K562 (cell line): ENCODE measurements at regions of chr22 and their contacts with region 1.

Region 1: DNA sequence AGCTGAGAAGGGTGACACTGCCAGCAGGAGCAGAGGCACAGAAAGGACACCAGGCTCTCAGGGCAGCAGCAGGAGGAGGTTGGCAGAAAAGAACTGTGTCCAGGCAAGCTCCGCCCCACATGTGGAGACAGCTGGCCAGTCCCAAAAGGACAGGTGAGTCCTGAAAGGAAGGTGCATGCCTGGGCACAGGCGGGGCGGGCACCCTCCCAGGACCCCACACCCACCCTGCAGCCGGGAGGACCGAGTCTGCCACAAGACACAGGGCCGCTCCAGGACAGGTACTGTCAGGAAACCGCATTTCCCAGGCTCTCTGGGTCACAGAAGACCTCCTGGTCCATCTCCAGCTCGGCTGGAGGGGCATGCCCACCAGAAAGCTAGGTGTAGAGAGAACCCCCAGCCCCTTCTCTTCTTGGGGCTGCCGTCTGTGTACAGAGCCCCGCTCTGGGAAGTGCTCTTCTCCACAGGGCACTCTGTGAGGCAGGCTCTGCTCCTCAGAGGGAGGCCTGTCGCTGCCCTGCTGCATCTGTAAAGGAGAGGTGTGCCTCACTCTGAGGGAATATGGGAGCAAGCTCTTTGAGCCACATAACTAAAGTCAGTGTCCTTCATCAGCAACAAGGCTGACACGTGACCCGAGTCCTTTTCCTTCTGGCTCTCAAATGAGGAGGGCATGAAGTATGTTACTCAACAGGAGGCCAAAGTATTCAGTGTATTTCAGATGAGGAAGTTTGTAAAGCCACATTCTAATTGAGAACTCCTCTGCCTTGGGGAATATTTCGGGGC is 50.5 kb downstream of the CLTCL1 start:
- DNase-seq: peak in 2 of 4 experiments; percentile 33 to 37
- ATAC-seq: peak; percentile 40
- H3K4me3 ChIP-seq: no peak overlapping the region
- H3K27ac ChIP-seq: no peak overlapping the region
- H3K4me1 ChIP-seq: peaks cover 4 to 6% of the 10 kb centered on the region in 2 experiments; a peak in 4 of 5 replicates
- H3K27me3 ChIP-seq: peaks cover 32 to 53% of the 10 kb centered on the region in 2 experiments; a peak in 4 of 5 replicates
- CTCF ChIP-seq: no peak
- EP300 ChIP-seq: no peak
- POLR2A ChIP-seq: no peak
- RAD21 ChIP-seq: no peak

Region 2: GRCh38 chr22:19226428-19226827 is 14.6 kb before region 1 on chr22:
- CTCF ChIA-PET with region 1: no interaction called
- POLR2A ChIA-PET with region 1: interaction called, 13 read pairs
- in situ Hi-C with region 1: no loop called
- intact Hi-C with region 1: no loop called
- DNase-seq: no peak
- ATAC-seq: no peak
- H3K4me3 ChIP-seq: no peak overlapping the region
- H3K27ac ChIP-seq: no peak overlapping the region
- H3K4me1 ChIP-seq: no peaks in the 10 kb centered on the region
- H3K27me3 ChIP-seq: peaks cover 13 to 17% of the 10 kb centered on the region in 2 experiments; a peak in 4 of 5 replicates
- CTCF ChIP-seq: no peak
- EP300 ChIP-seq: no peak
- POLR2A ChIP-seq: no peak
- RAD21 ChIP-seq: no peak

Region 3: GRCh38 chr22:19253143-19253542 is 12.1 kb after region 1 on chr22:
- CTCF ChIA-PET with region 1: no interaction called
- POLR2A ChIA-PET with region 1: interaction called, 21 read pairs
- in situ Hi-C with region 1: no loop called
- intact Hi-C with region 1: no loop called
- DNase-seq: no peak
- ATAC-seq: peak; percentile 43
- H3K4me3 ChIP-seq: no peak overlapping the region
- H3K27ac ChIP-seq: no peak overlapping the region
- H3K4me1 ChIP-seq: peaks cover 0 to 3% of the 10 kb centered on the region in 2 experiments; a peak in 2 of 5 replicates
- H3K27me3 ChIP-seq: peaks cover 8 to 15% of the 10 kb centered on the region in 2 experiments; a peak in 4 of 5 replicates
- CTCF ChIP-seq: no peak
- EP300 ChIP-seq: no peak
- POLR2A ChIP-seq: no peak
- RAD21 ChIP-seq: no peak